MCF 10A (cell line): ENCODE measurements at regions of chr13 and their contacts with region 1.

Region 1: GRCh38 chr13:32586080-32586900 is at the start of gene PDS5B:
- DNase-seq: peak; percentile 92
- H3K4me3 Mint-ChIP-seq: peak within 1 kb of the TSS; percentile 86
- H3K27ac Mint-ChIP-seq: peak within 1 kb of the TSS; percentile 85
- H3K4me1 Mint-ChIP-seq: peaks cover 30% of the 10 kb centered on the region
- H3K27me3 Mint-ChIP-seq: no peaks in the 10 kb centered on the region
- CTCF ChIP-seq: peak; percentile 72
- total RNA-seq, gene PDS5B: 25.4 and 29.6 TPM in 2 replicates

Region 2: DNA sequence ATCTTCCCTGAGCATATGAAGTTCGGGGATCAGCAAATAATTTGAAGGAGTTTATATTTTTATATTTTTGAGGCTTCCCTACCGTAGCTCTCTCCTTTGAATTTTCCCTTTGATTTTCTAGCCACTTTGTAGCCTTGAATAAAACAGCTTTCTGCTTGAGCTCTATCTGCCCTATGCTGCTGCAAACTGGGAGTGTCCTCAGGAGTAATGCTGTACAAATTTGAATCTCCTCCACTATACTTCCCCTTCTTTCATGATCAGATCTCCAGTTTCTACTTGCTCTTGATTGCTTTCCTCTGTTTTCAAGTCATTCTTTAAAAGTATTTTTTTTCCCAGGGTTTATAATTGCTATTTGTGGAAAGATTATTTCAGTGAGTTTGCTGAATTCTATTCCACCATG is 14.6 kb after region 1 on chr13:
- CTCF ChIA-PET with region 1: interaction called, 10 read pairs
- POLR2A ChIA-PET with region 1: interaction called, 9 read pairs
- intact Hi-C with region 1: no loop called
- DNase-seq: no peak
- H3K4me3 Mint-ChIP-seq: no peak overlapping the region
- H3K27ac Mint-ChIP-seq: peak overlapping the region; percentile 13
- H3K4me1 Mint-ChIP-seq: no peaks in the 10 kb centered on the region
- H3K27me3 Mint-ChIP-seq: no peaks in the 10 kb centered on the region
- CTCF ChIP-seq: no peak

Region 3: GRCh38 chr13:32639502-32640105 is 53.3 kb after region 1 on chr13:
- CTCF ChIA-PET with region 1: interaction called, 42 read pairs
- POLR2A ChIA-PET with region 1: interaction called, 20 read pairs
- intact Hi-C with region 1: loop called (anchors 1 kb)
- DNase-seq: peak; percentile 68
- H3K4me3 Mint-ChIP-seq: no peak overlapping the region
- H3K27ac Mint-ChIP-seq: no peak overlapping the region
- H3K4me1 Mint-ChIP-seq: peaks cover 15% of the 10 kb centered on the region
- H3K27me3 Mint-ChIP-seq: no peaks in the 10 kb centered on the region
- CTCF ChIP-seq: peak; percentile 63

Region 4: DNA sequence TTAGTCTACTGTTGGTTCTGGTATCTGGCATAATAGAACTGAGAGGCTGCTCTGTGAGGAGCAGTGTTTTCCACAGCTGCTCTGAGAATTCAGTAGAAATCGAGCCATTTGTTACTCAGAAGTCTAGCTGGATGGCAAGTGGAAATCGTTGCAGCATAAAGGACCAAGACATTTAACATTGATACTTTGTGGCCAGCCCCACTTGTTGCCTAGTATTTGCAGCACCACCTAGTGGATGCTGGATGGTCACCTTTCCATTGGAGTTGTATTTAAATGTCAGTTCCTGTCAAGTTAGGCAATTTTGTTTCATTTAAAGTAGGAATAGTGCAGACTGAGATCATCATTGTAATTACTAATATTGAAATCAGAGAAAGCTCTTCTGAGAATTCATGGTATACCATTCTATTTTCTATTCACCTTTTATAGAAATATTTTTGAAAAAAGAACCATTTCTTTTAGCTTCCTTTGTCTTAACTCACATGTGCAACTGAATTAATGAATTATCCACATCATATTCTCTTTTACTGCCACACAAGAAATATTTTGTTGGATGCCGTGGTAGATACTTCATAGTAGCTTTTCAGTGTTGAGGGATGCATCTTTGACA is 64.5 kb after region 1 on chr13:
- CTCF ChIA-PET with region 1: interaction called, 19 read pairs
- POLR2A ChIA-PET with region 1: interaction called, 14 read pairs
- intact Hi-C with region 1: no loop called
- DNase-seq: peak; percentile 74
- H3K4me3 Mint-ChIP-seq: no peak overlapping the region
- H3K27ac Mint-ChIP-seq: no peak overlapping the region
- H3K4me1 Mint-ChIP-seq: peaks cover 6% of the 10 kb centered on the region
- H3K27me3 Mint-ChIP-seq: no peaks in the 10 kb centered on the region
- CTCF ChIP-seq: peak; percentile 79

Region 5: DNA sequence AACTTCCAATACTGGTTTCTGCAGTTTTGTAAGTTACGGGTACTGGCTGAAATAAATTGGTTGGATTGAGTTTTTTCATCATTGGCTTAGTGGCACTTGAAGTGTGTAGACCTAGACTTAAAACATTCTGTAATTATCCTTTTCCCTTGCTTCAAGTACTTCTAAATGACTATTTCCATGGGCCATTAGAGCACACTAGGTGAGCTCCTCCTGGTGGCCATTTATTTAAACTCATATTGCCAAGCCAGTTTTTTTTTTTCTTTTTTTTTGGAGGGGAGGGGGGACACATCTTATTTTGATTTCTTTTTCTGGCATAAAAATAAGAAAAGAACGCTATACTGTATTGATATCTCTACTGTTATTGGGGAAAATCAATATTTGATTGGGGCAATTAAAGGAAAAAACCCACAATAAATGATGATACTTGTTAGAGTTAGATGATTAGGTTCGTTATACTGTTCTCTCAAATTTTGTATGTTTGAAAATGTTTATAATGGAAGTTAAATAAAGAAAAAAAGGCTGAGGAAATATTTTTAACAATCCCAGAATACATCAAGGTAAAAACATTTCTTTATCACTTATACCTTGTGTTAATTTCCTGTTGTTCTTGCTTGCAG is 82.8 kb after region 1 on chr13:
- CTCF ChIA-PET with region 1: interaction called, 11 read pairs
- POLR2A ChIA-PET with region 1: interaction called, 10 read pairs
- intact Hi-C with region 1: loop called (anchors 1 kb)
- DNase-seq: peak; percentile 55
- H3K4me3 Mint-ChIP-seq: no peak overlapping the region
- H3K27ac Mint-ChIP-seq: no peak overlapping the region
- H3K4me1 Mint-ChIP-seq: no peaks in the 10 kb centered on the region
- H3K27me3 Mint-ChIP-seq: no peaks in the 10 kb centered on the region
- CTCF ChIP-seq: peak; percentile 56

Region 6: GRCh38 chr13:32866921-32867320 is 280.6 kb after region 1 on chr13:
- CTCF ChIA-PET with region 1: no interaction called
- POLR2A ChIA-PET with region 1: no interaction called
- intact Hi-C with region 1: no loop called
- DNase-seq: no peak
- H3K4me3 Mint-ChIP-seq: no peak overlapping the region
- H3K27ac Mint-ChIP-seq: no peak overlapping the region
- H3K4me1 Mint-ChIP-seq: no peaks in the 10 kb centered on the region
- H3K27me3 Mint-ChIP-seq: no peaks in the 10 kb centered on the region
- CTCF ChIP-seq: no peak

Region 7: DNA sequence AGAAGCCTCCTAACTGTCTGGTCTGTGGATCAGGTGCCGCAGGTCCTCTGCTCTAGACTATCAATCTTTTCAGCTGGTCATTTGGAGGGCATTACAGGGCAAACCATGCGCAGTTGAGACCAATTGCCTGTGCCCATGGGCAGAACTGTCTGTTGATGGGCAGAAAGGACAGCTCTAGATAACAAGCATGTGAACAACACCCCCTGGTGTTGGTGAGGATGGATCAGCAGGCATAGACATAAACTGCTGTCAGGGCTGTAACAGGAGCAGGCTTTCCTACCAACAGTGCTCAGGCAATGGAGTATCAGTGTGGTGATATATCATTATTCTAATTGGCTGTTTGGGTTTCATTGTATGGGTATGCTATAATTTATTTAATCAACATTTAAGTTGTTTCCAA is 325.2 kb after region 1 on chr13:
- CTCF ChIA-PET with region 1: interaction called, 5 read pairs
- POLR2A ChIA-PET with region 1: interaction called, 3 read pairs
- intact Hi-C with region 1: loop called (anchors 1 kb)
- DNase-seq: peak; percentile 72
- H3K4me3 Mint-ChIP-seq: no peak overlapping the region
- H3K27ac Mint-ChIP-seq: no peak overlapping the region
- H3K4me1 Mint-ChIP-seq: no peaks in the 10 kb centered on the region
- H3K27me3 Mint-ChIP-seq: no peaks in the 10 kb centered on the region
- CTCF ChIP-seq: peak; percentile 29

Region 8: GRCh38 chr13:33228648-33229445 is 642.6 kb after region 1 on chr13:
- CTCF ChIA-PET with region 1: no interaction called
- POLR2A ChIA-PET with region 1: no interaction called
- intact Hi-C with region 1: loop called (anchors 10 kb)
- DNase-seq: peak; percentile 61
- H3K4me3 Mint-ChIP-seq: peak overlapping the region; percentile 9
- H3K27ac Mint-ChIP-seq: peak overlapping the region; percentile 46
- H3K4me1 Mint-ChIP-seq: peaks cover 49% of the 10 kb centered on the region
- H3K27me3 Mint-ChIP-seq: no peaks in the 10 kb centered on the region
- CTCF ChIP-seq: peak; percentile 89